Vagina (tissue), 2 donors: ENCODE measurements at regions of chr2 and their contacts with region 1.

Region 1: DNA sequence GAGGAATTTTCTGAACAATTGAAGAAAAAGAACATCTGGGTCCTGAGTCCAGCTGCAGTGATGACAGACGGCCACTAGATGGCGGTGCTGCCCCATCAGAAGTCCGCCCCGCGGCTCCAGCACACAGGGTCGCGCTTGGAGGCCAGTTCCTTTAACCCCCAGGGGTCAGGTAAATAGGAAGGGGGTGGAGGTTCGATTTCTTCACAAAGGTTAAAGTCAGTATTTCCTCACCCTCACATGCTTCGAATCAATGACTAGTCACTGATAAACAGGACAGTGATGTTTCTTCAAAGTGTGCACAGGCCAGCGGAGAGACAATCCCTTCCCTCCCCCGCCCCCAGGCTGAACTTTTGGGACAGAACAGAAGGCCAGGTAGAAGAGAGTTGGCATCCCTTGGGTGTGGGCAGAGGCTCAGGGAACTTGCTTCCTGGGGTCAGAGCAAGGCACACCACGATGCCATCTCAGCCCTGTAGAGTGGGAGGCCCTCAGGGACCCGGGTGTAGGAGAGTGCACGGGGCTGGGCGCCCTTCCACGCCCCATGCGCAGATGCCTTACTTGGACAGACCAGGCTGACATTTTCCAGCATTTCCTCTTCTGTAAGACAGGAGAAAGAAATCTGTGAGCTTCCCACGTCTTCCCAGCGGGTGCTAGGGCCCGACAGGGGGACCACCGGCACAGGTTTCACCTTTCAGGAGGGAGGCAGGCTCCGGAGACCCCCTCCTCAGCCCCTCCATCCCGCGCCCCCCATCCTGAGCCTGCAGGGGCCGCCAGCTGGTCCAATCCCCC is 722 bp downstream of the APOB start:
- DNase-seq: no peak
- H3K4me3 ChIP-seq: no peak overlapping the region
- H3K27ac ChIP-seq: no peak overlapping the region
- H3K4me1 ChIP-seq: no peaks in the 10 kb centered on the region
- H3K27me3 ChIP-seq: no peaks in the 10 kb centered on the region
- CTCF ChIP-seq: peak; percentile 87 to 97 (median 88)
- POLR2A ChIP-seq: no peak

Region 2: GRCh38 chr2:21083482-21083881 is 40.3 kb after region 1 on chr2:
- intact Hi-C with region 1: no loop called
- DNase-seq: no peak
- H3K4me3 ChIP-seq: no peak overlapping the region
- H3K27ac ChIP-seq: no peak overlapping the region
- H3K4me1 ChIP-seq: no peaks in the 10 kb centered on the region
- H3K27me3 ChIP-seq: no peaks in the 10 kb centered on the region
- CTCF ChIP-seq: no peak
- POLR2A ChIP-seq: no peak

Region 3: DNA sequence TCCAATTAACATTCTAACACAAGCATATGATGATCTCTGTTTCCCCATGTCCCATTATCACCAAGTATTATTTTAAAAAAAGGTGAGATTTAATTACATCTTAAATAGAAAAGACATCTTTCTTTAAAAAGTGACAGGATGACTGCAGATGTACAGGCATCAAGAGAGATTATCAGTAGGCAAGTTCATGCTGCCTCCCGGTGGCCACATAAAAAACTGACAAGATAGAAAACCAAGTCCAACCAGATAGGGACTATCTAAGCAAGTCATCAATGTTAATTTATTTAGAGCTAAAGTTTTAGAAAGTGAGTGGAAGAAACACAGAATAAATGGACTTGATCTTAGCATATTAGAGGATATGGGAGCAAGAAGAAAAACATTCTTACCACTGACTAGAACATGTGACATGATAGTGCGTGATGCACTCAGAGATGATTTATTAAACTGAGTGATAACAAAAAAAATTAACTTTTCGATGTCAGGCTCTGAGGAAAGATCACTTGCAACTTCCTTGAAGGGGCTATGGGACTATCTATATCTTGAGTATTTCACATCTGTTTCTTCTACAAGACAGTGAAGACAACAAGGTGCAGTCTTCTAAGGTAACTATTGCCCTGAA is 75.3 kb after region 1 on chr2:
- intact Hi-C with region 1: loop called (anchors 10 kb)
- DNase-seq: no peak
- H3K4me3 ChIP-seq: no peak overlapping the region
- H3K27ac ChIP-seq: no peak overlapping the region
- H3K4me1 ChIP-seq: no peaks in the 10 kb centered on the region
- H3K27me3 ChIP-seq: no peaks in the 10 kb centered on the region
- CTCF ChIP-seq: peak in 1 of 3 experiments; percentile 42
- POLR2A ChIP-seq: no peak

Region 4: DNA sequence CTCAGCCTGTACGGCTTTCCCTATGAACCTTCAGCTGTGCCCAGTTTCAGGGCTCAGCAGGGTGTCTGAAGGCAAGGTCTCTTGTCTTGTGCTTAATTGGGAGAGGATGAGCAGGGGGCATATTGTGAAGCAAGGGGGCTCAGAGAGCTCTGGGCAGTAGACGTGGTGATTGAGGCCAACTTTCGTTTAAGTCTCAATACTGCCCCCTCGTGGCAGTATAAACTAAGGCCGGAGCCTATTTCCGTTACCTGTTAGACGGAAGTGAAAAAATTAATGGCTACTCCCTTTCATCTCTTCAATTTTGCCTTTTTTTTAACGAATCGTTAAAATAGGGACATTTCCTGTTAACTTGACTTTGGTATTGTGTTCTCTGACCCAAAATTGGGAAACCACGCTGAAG is 274.0 kb after region 1 on chr2:
- intact Hi-C with region 1: loop called (anchors 10 kb)
- DNase-seq: no peak
- H3K4me3 ChIP-seq: no peak overlapping the region
- H3K27ac ChIP-seq: no peak overlapping the region
- H3K4me1 ChIP-seq: no peaks in the 10 kb centered on the region
- H3K27me3 ChIP-seq: no peaks in the 10 kb centered on the region
- CTCF ChIP-seq: peak; percentile 41 to 63 (median 51)
- POLR2A ChIP-seq: no peak